ENCODE measurements at regions of chr1 and their contacts with region 1.

Region 1: DNA sequence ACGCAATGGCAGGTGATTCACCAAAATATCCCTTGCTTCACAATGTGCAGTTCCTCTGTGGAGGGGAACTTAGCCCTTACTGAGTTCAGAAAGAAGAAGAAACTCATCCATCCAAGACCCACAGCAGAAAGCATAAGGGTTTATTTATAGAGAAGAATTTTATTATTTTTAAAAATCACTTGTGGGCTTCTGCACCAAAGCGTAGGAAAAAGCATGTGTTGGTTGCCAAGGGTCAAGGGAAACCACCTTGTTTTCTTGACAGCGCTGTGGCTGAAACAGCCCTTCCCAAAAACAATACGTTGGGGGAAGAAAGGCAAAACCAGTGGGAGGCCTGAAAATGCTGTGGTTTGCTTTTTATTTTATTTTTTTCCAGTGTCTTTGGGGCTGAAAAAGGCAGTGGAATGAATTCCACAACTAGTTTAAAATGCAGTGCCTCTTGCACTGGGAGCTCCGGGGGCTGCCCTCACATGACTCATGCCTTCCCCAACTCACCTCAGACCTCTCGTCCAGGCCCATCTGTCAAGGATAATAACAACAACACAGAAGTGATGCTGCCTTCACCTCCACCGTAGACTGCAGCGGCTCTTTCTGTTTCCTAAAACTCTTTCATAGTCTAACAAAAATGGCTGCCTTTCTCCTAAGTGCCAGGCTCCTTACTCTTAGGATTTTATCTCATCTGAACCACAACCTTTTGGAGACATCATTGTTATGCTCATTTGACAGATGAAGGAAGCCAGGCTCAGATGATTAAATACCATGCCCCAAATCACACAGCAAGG is 224.2 kb upstream of the JUN start:
- DNase-seq: no peak
- ATAC-seq: peak; percentile 71
- H3K4me3 ChIP-seq: peak overlapping the region; percentile 9; the same call in 1 of the 2 replicates
- H3K27ac ChIP-seq: peak overlapping the region; percentile 15
- H3K4me1 ChIP-seq: peaks cover 55% of the 10 kb centered on the region
- H3K27me3 ChIP-seq: no peaks in the 10 kb centered on the region
- CTCF ChIP-seq: no peak
- EP300 ChIP-seq: peak; percentile 14 to 63; a peak in 3 of 4 replicates
- POLR2A ChIP-seq: no peak
- RAD21 ChIP-seq: no peak

Region 2: GRCh38 chr1:58816072-58816746 is 191.8 kb before region 1 on chr1:
- CTCF ChIA-PET with region 1: no interaction called
- POLR2A ChIA-PET with region 1: no interaction called
- RAD21 ChIA-PET with region 1: interaction called, 4 read pairs
- SMC1A ChIA-PET with region 1: interaction called, 9 read pairs
- in situ Hi-C with region 1: no loop called
- intact Hi-C with region 1: loop called (anchors 5 kb)
- DNase-seq: peak; percentile 53
- ATAC-seq: peak; percentile 95
- H3K4me3 ChIP-seq: peak overlapping the region; percentile 88
- H3K27ac ChIP-seq: peak overlapping the region; percentile 73
- H3K4me1 ChIP-seq: peaks cover 13% of the 10 kb centered on the region
- H3K27me3 ChIP-seq: no peaks in the 10 kb centered on the region
- CTCF ChIP-seq: peak; percentile 22 to 44 (median 24); a peak in 3 of 6 replicates
- EP300 ChIP-seq: no peak
- POLR2A ChIP-seq: peak; percentile 86
- RAD21 ChIP-seq: peak; percentile 45

Region 3: DNA sequence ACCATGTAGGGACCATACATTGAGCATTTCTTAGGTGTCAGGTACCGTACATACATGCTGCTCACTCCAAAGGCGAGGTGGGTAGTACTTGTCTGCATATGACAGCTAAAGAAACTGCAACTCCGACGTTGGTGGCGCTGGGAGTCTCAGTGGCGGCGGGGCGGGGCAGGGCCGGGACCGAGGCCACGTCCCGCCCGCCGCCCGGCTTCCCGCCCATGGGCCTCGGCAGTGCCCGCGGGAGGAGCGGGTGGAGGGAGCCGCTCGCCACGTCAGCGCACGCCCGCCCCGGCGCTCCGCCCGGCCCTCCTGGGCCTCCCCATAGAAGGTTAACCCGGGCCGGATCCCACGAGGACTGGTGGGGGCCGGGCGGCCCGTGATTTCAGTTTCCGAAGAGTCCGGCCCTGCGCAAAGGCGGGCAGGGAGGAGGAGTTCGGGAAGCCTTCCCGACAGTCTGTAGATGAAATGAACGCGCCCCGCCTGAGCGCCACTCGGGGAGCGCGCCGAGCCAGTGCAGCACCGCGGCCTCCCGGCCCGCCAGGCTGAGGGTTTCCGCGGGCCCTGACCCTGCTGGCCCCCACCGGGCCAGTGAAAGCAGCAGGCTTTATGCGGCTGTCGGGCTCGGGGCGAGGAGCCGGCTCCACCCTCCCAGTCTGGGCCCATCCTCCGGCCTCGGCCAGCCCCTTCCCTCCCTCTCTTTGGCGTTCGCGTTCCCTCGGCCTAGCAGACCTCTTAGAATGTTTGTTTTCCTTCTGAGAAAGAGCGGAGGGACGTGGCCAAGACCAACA is 104.3 kb before region 1 on chr1:
- CTCF ChIA-PET with region 1: interaction called, 3 read pairs
- POLR2A ChIA-PET with region 1: interaction called, 3 read pairs
- RAD21 ChIA-PET with region 1: interaction called, 8 read pairs
- SMC1A ChIA-PET with region 1: interaction called, 9 read pairs
- in situ Hi-C with region 1: no loop called
- intact Hi-C with region 1: loop called (anchors 5 kb)
- DNase-seq: peak; percentile 59
- ATAC-seq: peak; percentile 96
- H3K4me3 ChIP-seq: peak overlapping the region; percentile 58; the same call in 1 of the 2 replicates
- H3K27ac ChIP-seq: peak overlapping the region; percentile 60
- H3K4me1 ChIP-seq: peaks cover 9% of the 10 kb centered on the region; the same call in 1 of the 2 replicates
- H3K27me3 ChIP-seq: no peaks in the 10 kb centered on the region
- CTCF ChIP-seq: no peak
- EP300 ChIP-seq: no peak
- POLR2A ChIP-seq: peak; percentile 81
- RAD21 ChIP-seq: no peak

Region 4: DNA sequence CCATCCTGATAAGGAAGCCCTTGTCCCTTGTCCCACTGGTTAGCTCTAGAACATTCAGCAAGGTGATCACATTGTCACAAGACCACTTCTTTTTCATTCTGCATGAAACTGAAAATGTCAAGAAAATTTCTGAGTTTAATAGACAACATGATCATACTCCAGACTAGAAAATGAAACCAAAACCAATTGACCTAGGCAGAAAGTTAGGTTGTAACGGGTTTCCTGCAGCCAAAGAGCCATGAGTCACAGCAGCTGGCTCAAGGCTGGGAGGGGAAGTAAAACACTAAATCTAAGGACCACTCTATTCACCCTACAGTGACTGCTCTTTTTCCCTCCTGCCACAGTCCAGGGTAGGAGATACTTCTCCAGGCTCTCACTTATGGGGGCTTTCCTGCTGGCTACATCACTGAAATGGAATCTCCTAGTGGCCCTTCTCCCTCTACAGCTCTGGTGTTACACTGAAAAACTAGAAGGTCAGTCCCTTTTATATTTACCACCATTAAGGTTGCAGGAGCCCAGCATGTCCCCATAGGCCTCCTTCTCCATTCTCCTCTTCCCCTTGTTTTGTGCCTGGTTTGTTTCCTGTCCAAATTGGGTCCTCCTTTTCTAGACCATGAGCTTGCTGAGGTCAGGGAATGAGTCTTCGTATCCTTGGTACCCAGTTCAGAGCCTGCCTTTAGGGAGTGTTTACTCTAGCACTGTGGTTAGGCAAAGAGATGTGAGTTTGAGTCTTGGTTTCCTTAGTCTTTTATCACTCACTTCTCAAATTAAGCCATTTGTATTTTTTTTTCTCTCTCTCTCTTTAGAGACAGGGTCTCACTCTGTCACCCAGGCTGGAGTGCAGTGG is 12.4 kb after region 1 on chr1:
- CTCF ChIA-PET with region 1: interaction called, 7 read pairs
- POLR2A ChIA-PET with region 1: interaction called, 15 read pairs
- RAD21 ChIA-PET with region 1: interaction called, 13 read pairs
- SMC1A ChIA-PET with region 1: interaction called, 61 read pairs
- in situ Hi-C with region 1: no loop called
- intact Hi-C with region 1: no loop called
- DNase-seq: peak; percentile 87
- ATAC-seq: peak; percentile 93
- H3K4me3 ChIP-seq: peak overlapping the region; percentile 53; the same call in 1 of the 2 replicates
- H3K27ac ChIP-seq: peak overlapping the region; percentile 75
- H3K4me1 ChIP-seq: peaks cover 20% of the 10 kb centered on the region
- H3K27me3 ChIP-seq: no peaks in the 10 kb centered on the region
- CTCF ChIP-seq: no peak
- EP300 ChIP-seq: no peak
- POLR2A ChIP-seq: no peak
- RAD21 ChIP-seq: peak; percentile 12; the same call in 1 of the 2 replicates